Activated B cell treated with CpG ODN at 0.5 μM for 24 hours (primary cell): ENCODE measurements at regions of chr14 and their contacts with region 1.

Region 1: GRCh38 chr14:39114073-39114838 is at the start of gene GEMIN2:
- DNase-seq: peak; percentile 83
- ATAC-seq: peak; percentile 99
- H3K4me3 Mint-ChIP-seq: peak within 1 kb of the TSS; percentile 98
- H3K27ac Mint-ChIP-seq: peak within 1 kb of the TSS; percentile 95
- H3K4me1 Mint-ChIP-seq: peaks cover 28% of the 10 kb centered on the region
- H3K27me3 Mint-ChIP-seq: no peaks in the 10 kb centered on the region
- CTCF ChIP-seq: no peak
- total RNA-seq, gene GEMIN2: 12.3 and 12.6 TPM in 2 replicates

Region 2: DNA sequence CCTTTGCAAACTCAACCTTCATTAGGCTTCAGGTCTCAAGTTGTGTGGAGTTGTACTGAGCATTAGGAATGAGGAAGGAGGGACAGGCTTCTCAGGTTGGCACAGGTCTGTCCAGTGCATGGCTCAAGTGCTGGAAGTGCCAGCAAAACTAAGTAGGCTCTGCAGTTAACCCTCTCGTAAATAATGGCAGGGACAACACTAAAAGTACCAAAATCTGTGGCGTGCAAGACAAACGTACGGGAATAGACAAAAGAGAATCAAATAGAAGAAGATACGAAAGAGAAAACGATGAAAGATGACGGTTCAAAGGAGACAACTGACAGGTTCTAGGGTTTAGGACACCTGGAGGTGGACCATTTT is 55.3 kb after region 1 on chr14:
- CTCF ChIA-PET with region 1: interaction called, 5 read pairs
- POLR2A ChIA-PET with region 1: interaction called, 67 read pairs
- intact Hi-C with region 1: loop called (anchors 1 kb)
- DNase-seq: no peak
- ATAC-seq: no peak
- H3K4me3 Mint-ChIP-seq: peak overlapping the region; percentile 98
- H3K27ac Mint-ChIP-seq: peak overlapping the region; percentile 98
- H3K4me1 Mint-ChIP-seq: peaks cover 39% of the 10 kb centered on the region
- H3K27me3 Mint-ChIP-seq: no peaks in the 10 kb centered on the region
- CTCF ChIP-seq: no peak

Region 3: DNA sequence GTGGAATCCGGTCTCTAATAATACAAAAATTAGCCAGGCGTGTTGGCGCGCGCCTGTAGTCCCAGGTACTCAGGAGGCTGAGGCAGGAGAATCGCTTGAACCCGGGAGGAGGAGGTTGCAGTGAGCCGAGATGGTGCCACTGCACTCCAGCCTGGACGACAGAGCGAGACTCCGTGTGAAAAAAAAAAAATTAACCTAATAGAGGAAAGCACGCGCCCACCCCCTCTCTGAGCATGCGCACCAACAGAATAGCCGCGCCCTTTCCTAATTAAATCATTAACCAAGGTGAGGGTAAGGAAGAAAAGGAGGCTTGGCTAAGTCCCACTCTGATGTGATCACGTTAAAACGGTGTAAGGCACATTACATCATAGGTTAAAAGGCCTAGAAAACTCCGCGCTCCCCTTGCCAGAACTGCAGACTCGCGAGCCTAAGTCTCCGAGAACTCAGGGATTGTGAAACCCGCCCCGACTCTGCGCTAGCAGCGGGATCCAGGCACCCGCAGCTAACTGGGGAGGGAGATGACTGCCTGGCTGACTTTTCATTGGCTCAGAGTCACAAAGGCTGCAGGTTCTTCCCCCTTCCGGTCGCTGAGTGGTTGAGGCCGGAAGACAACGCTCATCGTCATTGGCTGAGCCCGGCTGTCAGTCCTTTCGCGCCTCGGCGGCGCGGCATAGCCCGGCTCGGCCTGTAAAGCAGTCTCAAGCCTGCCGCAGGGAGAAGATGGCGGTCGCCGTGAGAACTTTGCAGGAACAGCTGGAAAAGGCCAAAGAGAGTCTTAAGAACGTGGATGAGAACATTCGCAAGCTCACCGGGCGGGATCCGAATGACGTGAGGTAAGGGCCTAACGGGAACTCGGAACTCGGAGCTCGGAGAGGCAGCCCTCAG is 60.5 kb after region 1 on chr14 and contains the start of gene PNN:
- CTCF ChIA-PET with region 1: interaction called, 5 read pairs
- POLR2A ChIA-PET with region 1: interaction called, 67 read pairs
- intact Hi-C with region 1: loop called (anchors 1 kb)
- DNase-seq: peak; percentile 87
- ATAC-seq: peak; percentile 82
- H3K4me3 Mint-ChIP-seq: peak within 1 kb of the TSS; percentile 99
- H3K27ac Mint-ChIP-seq: peak within 1 kb of the TSS; percentile 99
- H3K4me1 Mint-ChIP-seq: peaks cover 41% of the 10 kb centered on the region
- H3K27me3 Mint-ChIP-seq: no peaks in the 10 kb centered on the region
- CTCF ChIP-seq: no peak
- total RNA-seq, gene PNN: 102 and 109 TPM in 2 replicates

Region 4: DNA sequence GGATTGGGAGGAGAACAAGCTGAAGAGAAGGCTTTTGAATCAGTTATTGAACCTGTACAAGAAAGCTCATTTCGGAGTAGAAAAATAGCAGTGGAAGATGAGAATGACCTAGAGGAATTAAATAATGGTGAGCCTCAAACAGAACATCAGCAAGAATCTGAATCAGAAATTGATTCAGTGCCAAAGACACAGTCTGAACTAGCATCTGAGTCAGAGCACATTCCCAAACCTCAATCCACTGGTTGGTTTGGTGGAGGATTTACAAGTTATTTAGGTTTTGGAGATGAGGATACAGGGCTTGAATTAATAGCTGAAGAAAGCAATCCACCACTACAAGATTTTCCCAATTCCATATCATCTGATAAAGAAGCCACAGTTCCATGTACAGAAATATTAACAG is 133.0 kb after region 1 on chr14:
- CTCF ChIA-PET with region 1: no interaction called
- POLR2A ChIA-PET with region 1: no interaction called
- intact Hi-C with region 1: no loop called
- DNase-seq: no peak
- ATAC-seq: no peak
- H3K4me3 Mint-ChIP-seq: no peak overlapping the region
- H3K27ac Mint-ChIP-seq: no peak overlapping the region
- H3K4me1 Mint-ChIP-seq: no peaks in the 10 kb centered on the region
- H3K27me3 Mint-ChIP-seq: peaks cover 18% of the 10 kb centered on the region
- CTCF ChIP-seq: no peak